ENCODE measurements at regions of chr20 and their contacts with region 1.

Region 1: GRCh38 chr20:8019246-8019997 is at the start of gene TMX4:
- DNase-seq: peak; percentile 94
- ATAC-seq: peak; percentile 86
- H3K4me3 ChIP-seq: peak within 1 kb of the TSS; percentile 77 to 95 (median 89)
- H3K4me3 Mint-ChIP-seq: peak within 1 kb of the TSS; percentile 92
- H3K27ac ChIP-seq: peak within 1 kb of the TSS; percentile 84 to 94
- H3K27ac Mint-ChIP-seq: peak within 1 kb of the TSS; percentile 88
- H3K4me1 ChIP-seq: peaks cover 27 to 29% of the 10 kb centered on the region in 2 donors
- H3K4me1 Mint-ChIP-seq: peaks cover 23% of the 10 kb centered on the region
- H3K27me3 ChIP-seq: no peaks in the 10 kb centered on the region
- H3K27me3 Mint-ChIP-seq: no peaks in the 10 kb centered on the region
- CTCF ChIP-seq: peak; percentile 66
- total RNA-seq, gene TMX4: 55.8 and 62.9 TPM in 2 replicates

Region 2: GRCh38 chr20:7754102-7754501 is 265.3 kb before region 1 on chr20:
- CTCF ChIA-PET with region 1: no interaction called
- POLR2A ChIA-PET with region 1: no interaction called
- intact Hi-C with region 1: no loop called
- DNase-seq: no peak
- ATAC-seq: no peak
- H3K4me3 ChIP-seq: no peak overlapping the region
- H3K4me3 Mint-ChIP-seq: no peak overlapping the region
- H3K27ac ChIP-seq: no peak overlapping the region
- H3K27ac Mint-ChIP-seq: no peak overlapping the region
- H3K4me1 ChIP-seq: no peaks in the 10 kb centered on the region
- H3K4me1 Mint-ChIP-seq: no peaks in the 10 kb centered on the region
- H3K27me3 ChIP-seq: no peaks in the 10 kb centered on the region
- H3K27me3 Mint-ChIP-seq: no peaks in the 10 kb centered on the region
- CTCF ChIP-seq: no peak

Region 3: GRCh38 chr20:7980332-7981046 is 38.9 kb before region 1 on chr20:
- CTCF ChIA-PET with region 1: interaction called, 3 read pairs
- POLR2A ChIA-PET with region 1: no interaction called
- intact Hi-C with region 1: loop called (anchors 5 kb)
- DNase-seq: peak; percentile 18
- ATAC-seq: peak; percentile 41
- H3K4me3 ChIP-seq: no peak overlapping the region
- H3K4me3 Mint-ChIP-seq: no peak overlapping the region
- H3K27ac ChIP-seq: no peak overlapping the region
- H3K27ac Mint-ChIP-seq: no peak overlapping the region
- H3K4me1 ChIP-seq: no peaks in the 10 kb centered on the region
- H3K4me1 Mint-ChIP-seq: no peaks in the 10 kb centered on the region
- H3K27me3 ChIP-seq: no peaks in the 10 kb centered on the region
- H3K27me3 Mint-ChIP-seq: no peaks in the 10 kb centered on the region
- CTCF ChIP-seq: peak; percentile 37

Region 4: GRCh38 chr20:8043687-8044282 is 24.4 kb after region 1 on chr20:
- CTCF ChIA-PET with region 1: interaction called, 58 read pairs
- POLR2A ChIA-PET with region 1: interaction called, 3 read pairs
- intact Hi-C with region 1: loop called (anchors 1 kb)
- DNase-seq: peak; percentile 75
- ATAC-seq: peak; percentile 67
- H3K4me3 ChIP-seq: no peak overlapping the region
- H3K4me3 Mint-ChIP-seq: no peak overlapping the region
- H3K27ac ChIP-seq: no peak overlapping the region
- H3K27ac Mint-ChIP-seq: no peak overlapping the region
- H3K4me1 ChIP-seq: no peaks in the 10 kb centered on the region
- H3K4me1 Mint-ChIP-seq: peaks cover 2% of the 10 kb centered on the region
- H3K27me3 ChIP-seq: no peaks in the 10 kb centered on the region
- H3K27me3 Mint-ChIP-seq: peaks cover 7% of the 10 kb centered on the region
- CTCF ChIP-seq: peak; percentile 94

Region 5: DNA sequence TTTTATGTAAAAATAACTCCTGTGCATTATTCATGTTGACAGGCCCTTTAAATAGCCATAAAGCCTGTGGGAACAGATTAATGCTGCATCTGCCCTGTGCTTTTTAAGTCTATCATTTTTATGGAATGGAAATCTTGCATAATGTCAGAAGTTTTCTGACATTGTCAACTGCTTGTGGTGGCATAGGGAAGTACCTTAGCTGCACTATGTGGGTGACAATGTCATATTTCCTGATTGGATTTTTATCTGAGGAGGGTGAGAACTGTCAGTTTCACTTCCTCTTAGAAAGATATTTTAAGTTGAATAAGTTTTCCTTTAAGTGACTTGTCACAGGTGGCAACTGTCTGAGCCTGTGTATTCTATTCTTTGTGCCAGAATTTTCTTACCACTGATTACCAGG is 380.5 kb after region 1 on chr20:
- CTCF ChIA-PET with region 1: no interaction called
- POLR2A ChIA-PET with region 1: no interaction called
- intact Hi-C with region 1: loop called (anchors 2 kb)
- DNase-seq: peak; percentile 76
- ATAC-seq: peak; percentile 89
- H3K4me3 ChIP-seq: no peak overlapping the region
- H3K4me3 Mint-ChIP-seq: no peak overlapping the region
- H3K27ac ChIP-seq: peak overlapping the region in 1 of 2 donors; percentile 10
- H3K27ac Mint-ChIP-seq: no peak overlapping the region
- H3K4me1 ChIP-seq: peaks cover 8 to 19% of the 10 kb centered on the region in 2 donors
- H3K4me1 Mint-ChIP-seq: peaks cover 12% of the 10 kb centered on the region
- H3K27me3 ChIP-seq: no peaks in the 10 kb centered on the region
- H3K27me3 Mint-ChIP-seq: no peaks in the 10 kb centered on the region
- CTCF ChIP-seq: no peak

Measured in B cell (primary cell).